GM12878 (cell line): ENCODE measurements at regions of chrX and their contacts with region 1.

Region 1: GRCh38 chrX:18674788-18675735 is 3.2 kb upstream of the RS1 start:
- DNase-seq: peak; percentile 64
- ATAC-seq: peak; percentile 90
- H3K4me3 ChIP-seq: peak overlapping the region; percentile 68
- H3K27ac ChIP-seq: peak overlapping the region; percentile 81
- H3K4me1 ChIP-seq: peaks cover 2% of the 10 kb centered on the region; the same call in 1 of the 2 replicates
- H3K27me3 ChIP-seq: no peaks in the 10 kb centered on the region
- CTCF ChIP-seq: no peak
- EP300 ChIP-seq: peak in 1 of 2 experiments; percentile 69; a peak in 1 of 4 replicates
- POLR2A ChIP-seq: peak; percentile 70
- RAD21 ChIP-seq: 0 out of 2 replicates have a peak, but pooled peaks have one; percentile 2

Region 2: DNA sequence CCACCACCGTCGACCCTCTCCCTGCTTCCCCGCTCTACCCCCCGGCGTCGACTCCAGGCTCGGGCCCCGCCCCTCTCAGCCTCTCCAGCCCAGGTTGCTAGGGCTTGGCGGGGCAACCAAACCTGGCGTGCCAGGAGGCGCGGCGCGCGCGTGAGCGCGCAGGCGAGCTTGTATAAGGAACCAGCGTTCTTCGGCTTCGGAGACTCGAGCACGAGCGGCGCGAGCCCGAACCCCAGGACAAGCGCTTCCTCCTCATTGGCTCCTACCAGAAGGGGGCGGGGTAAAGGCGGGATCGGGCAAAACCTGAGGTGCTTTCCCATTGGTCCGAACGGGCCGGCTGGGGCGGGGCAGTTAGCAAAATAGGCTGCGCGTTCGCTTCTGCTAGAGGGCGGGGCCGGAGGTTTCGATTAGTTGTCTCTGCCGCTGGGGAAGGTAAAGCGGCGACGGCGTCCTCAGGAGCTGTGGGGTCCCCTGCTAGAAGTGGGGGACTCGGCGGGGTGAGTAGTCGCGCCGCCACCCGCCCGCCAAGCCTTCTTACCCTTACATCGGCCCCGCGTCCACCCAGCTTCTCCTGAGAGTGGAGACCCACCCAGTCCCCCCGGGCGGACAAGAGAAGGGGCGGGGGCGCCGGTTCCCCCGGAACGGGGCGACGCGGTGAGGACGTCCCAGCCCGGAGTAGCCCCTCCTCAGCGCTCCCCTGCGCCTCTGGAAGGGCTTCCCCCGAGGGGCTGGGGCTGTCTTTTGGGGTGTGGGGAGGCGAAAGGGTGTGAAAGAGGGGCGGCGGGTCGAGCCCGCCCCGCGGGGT is 249.7 kb before region 1 on chrX and contains the start of gene CDKL5:
- CTCF ChIA-PET with region 1: no interaction called
- POLR2A ChIA-PET with region 1: no interaction called
- RAD21 ChIA-PET with region 1: no interaction called
- SMC1A ChIA-PET with region 1: no interaction called
- in situ Hi-C with region 1: no loop called
- intact Hi-C with region 1: loop called (anchors 10 kb)
- DNase-seq: peak; percentile 75
- ATAC-seq: peak; percentile 95
- H3K4me3 ChIP-seq: peak within 1 kb of the TSS; percentile 64
- H3K27ac ChIP-seq: no peak within 1 kb of the TSS; the same call in 1 of the 2 replicates
- H3K4me1 ChIP-seq: peaks cover 2% of the 10 kb centered on the region; the same call in 1 of the 2 replicates
- H3K27me3 ChIP-seq: 0 out of 4 replicates have a peak, but pooled peaks cover 0 to 2% of the 10 kb centered on the region in 2 experiments
- CTCF ChIP-seq: no peak
- EP300 ChIP-seq: no peak
- POLR2A ChIP-seq: peak; percentile 67
- RAD21 ChIP-seq: no peak
- polyA plus RNA-seq, gene CDKL5: 1.4 to 2.3 TPM

Region 3: GRCh38 chrX:18855919-18856644 is 181.0 kb after region 1 on chrX:
- CTCF ChIA-PET with region 1: no interaction called
- POLR2A ChIA-PET with region 1: interaction called, 3 read pairs
- RAD21 ChIA-PET with region 1: interaction called, 4 read pairs
- SMC1A ChIA-PET with region 1: no interaction called
- in situ Hi-C with region 1: no loop called
- intact Hi-C with region 1: loop called (anchors 2 kb)
- DNase-seq: peak; percentile 90
- ATAC-seq: peak; percentile 94
- H3K4me3 ChIP-seq: no peak overlapping the region
- H3K27ac ChIP-seq: peak overlapping the region; percentile 96
- H3K4me1 ChIP-seq: peaks cover 19% of the 10 kb centered on the region
- H3K27me3 ChIP-seq: no peaks in the 10 kb centered on the region
- CTCF ChIP-seq: no peak
- EP300 ChIP-seq: peak; percentile 14 to 55; a peak in 1 of 4 replicates
- POLR2A ChIP-seq: no peak
- RAD21 ChIP-seq: peak; percentile 42; the same call in 1 of the 2 replicates

Region 4: DNA sequence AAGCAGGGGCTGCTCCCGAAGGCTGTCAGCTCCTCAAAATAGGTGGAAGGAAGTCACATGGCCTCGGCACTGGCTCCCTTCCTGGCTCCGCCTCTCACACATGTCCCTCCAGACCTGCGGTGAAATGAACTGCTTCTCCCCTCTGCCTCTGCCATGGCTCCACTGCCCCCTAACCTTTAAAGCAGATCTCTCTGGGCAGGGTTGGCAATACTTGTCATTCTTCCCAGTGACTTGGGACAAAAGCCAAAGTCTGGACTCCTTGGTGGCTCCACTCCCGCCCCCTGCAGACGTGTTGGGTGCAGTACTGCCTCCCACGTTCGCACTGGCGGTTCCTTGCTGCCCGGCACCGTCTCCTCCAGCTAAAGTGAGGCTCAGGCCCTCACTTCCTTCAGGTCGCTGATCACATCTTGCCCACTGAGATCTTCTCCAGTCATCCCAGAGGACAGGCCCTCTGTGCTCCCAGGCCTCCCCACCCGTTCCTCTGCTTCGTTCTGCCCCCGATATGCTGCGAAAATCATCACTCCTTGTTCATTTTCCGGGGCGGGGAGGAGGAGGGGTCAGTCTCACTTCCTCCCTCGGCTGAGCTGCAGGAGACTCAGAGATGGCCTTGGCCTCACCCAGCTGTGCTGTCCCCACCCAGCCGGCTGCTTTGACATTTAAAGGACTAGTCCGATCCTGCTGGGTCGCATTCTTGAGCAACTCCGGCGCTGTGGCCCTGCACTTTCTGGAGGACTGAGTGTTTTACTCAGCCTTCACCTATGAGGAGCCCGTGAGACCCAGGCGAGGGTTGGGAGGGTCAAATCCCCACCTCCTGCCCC is 211.5 kb after region 1 on chrX:
- CTCF ChIA-PET with region 1: interaction called, 11 read pairs
- POLR2A ChIA-PET with region 1: no interaction called
- RAD21 ChIA-PET with region 1: interaction called, 3 read pairs
- SMC1A ChIA-PET with region 1: no interaction called
- in situ Hi-C with region 1: loop called (anchors 5 kb)
- intact Hi-C with region 1: loop called (anchors 1 kb)
- DNase-seq: peak; percentile 66
- ATAC-seq: peak; percentile 87
- H3K4me3 ChIP-seq: peak overlapping the region; percentile 47
- H3K27ac ChIP-seq: peak overlapping the region; percentile 87
- H3K4me1 ChIP-seq: peaks cover 28% of the 10 kb centered on the region
- H3K27me3 ChIP-seq: no peaks in the 10 kb centered on the region
- CTCF ChIP-seq: peak; percentile 62 to 70 (median 69)
- EP300 ChIP-seq: no peak
- POLR2A ChIP-seq: 0 out of 2 replicates have a peak, but pooled peaks have one; percentile 34
- RAD21 ChIP-seq: peak; percentile 66

Region 5: GRCh38 chrX:18931972-18932371 is 256.9 kb after region 1 on chrX:
- CTCF ChIA-PET with region 1: no interaction called
- POLR2A ChIA-PET with region 1: no interaction called
- RAD21 ChIA-PET with region 1: no interaction called
- SMC1A ChIA-PET with region 1: no interaction called
- in situ Hi-C with region 1: no loop called
- intact Hi-C with region 1: no loop called
- DNase-seq: no peak
- ATAC-seq: peak; percentile 59
- H3K4me3 ChIP-seq: no peak overlapping the region
- H3K27ac ChIP-seq: no peak overlapping the region
- H3K4me1 ChIP-seq: no peaks in the 10 kb centered on the region
- H3K27me3 ChIP-seq: no peaks in the 10 kb centered on the region
- CTCF ChIP-seq: peak; percentile 20 to 40 (median 40); a peak in 5 of 6 replicates
- EP300 ChIP-seq: no peak
- POLR2A ChIP-seq: no peak
- RAD21 ChIP-seq: peak; percentile 47

Region 6: GRCh38 chrX:18984381-18985185 is 309.5 kb after region 1 on chrX:
- CTCF ChIA-PET with region 1: no interaction called
- POLR2A ChIA-PET with region 1: no interaction called
- RAD21 ChIA-PET with region 1: no interaction called
- SMC1A ChIA-PET with region 1: no interaction called
- in situ Hi-C with region 1: no loop called
- intact Hi-C with region 1: loop called (anchors 5 kb)
- DNase-seq: peak; percentile 23
- ATAC-seq: peak; percentile 92
- H3K4me3 ChIP-seq: peak overlapping the region; percentile 75
- H3K27ac ChIP-seq: peak overlapping the region; percentile 80
- H3K4me1 ChIP-seq: no peaks in the 10 kb centered on the region; the same call in 1 of the 2 replicates
- H3K27me3 ChIP-seq: no peaks in the 10 kb centered on the region
- CTCF ChIP-seq: peak in 1 of 3 experiments; percentile 39; a peak in 2 of 6 replicates
- EP300 ChIP-seq: no peak
- POLR2A ChIP-seq: peak; percentile 56
- RAD21 ChIP-seq: no peak

Region 7: DNA sequence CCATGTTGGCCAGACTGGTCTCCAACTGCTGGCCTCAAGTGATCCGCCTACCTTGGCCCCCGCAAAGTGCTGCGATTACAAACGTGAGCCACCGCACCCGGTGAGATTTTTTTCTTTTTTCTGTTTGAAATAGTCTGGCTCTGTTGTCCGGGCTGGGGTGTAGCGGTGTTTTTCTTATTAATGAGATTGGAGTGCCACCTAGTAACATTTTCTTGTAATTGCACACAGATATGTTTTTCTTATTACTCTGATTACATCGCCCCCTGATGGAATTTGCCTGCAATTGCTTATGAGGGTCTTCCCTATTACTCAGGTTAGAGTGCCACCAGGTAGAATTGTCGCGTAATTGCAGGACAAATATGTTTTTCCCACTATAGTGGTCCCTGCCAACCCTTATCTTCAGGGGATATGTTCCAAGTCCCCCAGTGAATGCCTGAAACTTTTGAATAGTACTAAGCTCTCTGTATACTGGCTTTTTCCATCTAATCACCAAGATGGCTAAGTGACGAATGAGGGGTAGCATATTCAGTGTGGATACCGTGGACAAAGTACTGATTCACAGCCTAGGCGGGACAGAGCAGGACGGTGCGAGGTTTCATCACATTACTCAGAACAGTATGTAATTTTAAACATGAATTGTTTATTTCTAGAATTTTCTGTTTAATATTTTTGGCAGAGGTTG is 660.0 kb after region 1 on chrX:
- CTCF ChIA-PET with region 1: no interaction called
- POLR2A ChIA-PET with region 1: no interaction called
- RAD21 ChIA-PET with region 1: no interaction called
- SMC1A ChIA-PET with region 1: no interaction called
- in situ Hi-C with region 1: loop called (anchors 10 kb)
- intact Hi-C with region 1: loop called (anchors 10 kb)
- DNase-seq: peak; percentile 15
- ATAC-seq: peak; percentile 83
- H3K4me3 ChIP-seq: no peak overlapping the region
- H3K27ac ChIP-seq: no peak overlapping the region
- H3K4me1 ChIP-seq: no peaks in the 10 kb centered on the region
- H3K27me3 ChIP-seq: no peaks in the 10 kb centered on the region
- CTCF ChIP-seq: peak; percentile 51 to 77 (median 52)
- EP300 ChIP-seq: no peak
- POLR2A ChIP-seq: no peak
- RAD21 ChIP-seq: peak; percentile 45

Region 8: GRCh38 chrX:19343535-19344408 is 668.7 kb after region 1 on chrX and contains the start of gene PDHA1:
- CTCF ChIA-PET with region 1: no interaction called
- POLR2A ChIA-PET with region 1: no interaction called
- RAD21 ChIA-PET with region 1: no interaction called
- SMC1A ChIA-PET with region 1: no interaction called
- in situ Hi-C with region 1: loop called (anchors 10 kb)
- intact Hi-C with region 1: loop called (anchors 10 kb)
- DNase-seq: peak; percentile 68
- ATAC-seq: peak; percentile 96
- H3K4me3 ChIP-seq: peak within 1 kb of the TSS; percentile 73
- H3K27ac ChIP-seq: peak within 1 kb of the TSS; percentile 40; the same call in 1 of the 2 replicates
- H3K4me1 ChIP-seq: no peaks in the 10 kb centered on the region
- H3K27me3 ChIP-seq: no peaks in the 10 kb centered on the region
- CTCF ChIP-seq: no peak
- EP300 ChIP-seq: no peak
- POLR2A ChIP-seq: peak; percentile 76
- RAD21 ChIP-seq: no peak
- polyA plus RNA-seq, gene PDHA1: 233 to 340 TPM